ENCODE measurements at regions of chr6 and their contacts with region 1.

Region 1: GRCh38 chr6:109187399-109188114 is 92.2 kb downstream of the CEP57L1 start:
- DNase-seq: peak; percentile 15 to 70 (median 66)
- ATAC-seq: peak; percentile 47 to 67
- H3K4me3 ChIP-seq: no peak overlapping the region
- H3K27ac ChIP-seq: no peak overlapping the region
- H3K4me1 ChIP-seq: peaks cover 1% of the 10 kb centered on the region
- H3K27me3 ChIP-seq: no peaks in the 10 kb centered on the region

Region 2: DNA sequence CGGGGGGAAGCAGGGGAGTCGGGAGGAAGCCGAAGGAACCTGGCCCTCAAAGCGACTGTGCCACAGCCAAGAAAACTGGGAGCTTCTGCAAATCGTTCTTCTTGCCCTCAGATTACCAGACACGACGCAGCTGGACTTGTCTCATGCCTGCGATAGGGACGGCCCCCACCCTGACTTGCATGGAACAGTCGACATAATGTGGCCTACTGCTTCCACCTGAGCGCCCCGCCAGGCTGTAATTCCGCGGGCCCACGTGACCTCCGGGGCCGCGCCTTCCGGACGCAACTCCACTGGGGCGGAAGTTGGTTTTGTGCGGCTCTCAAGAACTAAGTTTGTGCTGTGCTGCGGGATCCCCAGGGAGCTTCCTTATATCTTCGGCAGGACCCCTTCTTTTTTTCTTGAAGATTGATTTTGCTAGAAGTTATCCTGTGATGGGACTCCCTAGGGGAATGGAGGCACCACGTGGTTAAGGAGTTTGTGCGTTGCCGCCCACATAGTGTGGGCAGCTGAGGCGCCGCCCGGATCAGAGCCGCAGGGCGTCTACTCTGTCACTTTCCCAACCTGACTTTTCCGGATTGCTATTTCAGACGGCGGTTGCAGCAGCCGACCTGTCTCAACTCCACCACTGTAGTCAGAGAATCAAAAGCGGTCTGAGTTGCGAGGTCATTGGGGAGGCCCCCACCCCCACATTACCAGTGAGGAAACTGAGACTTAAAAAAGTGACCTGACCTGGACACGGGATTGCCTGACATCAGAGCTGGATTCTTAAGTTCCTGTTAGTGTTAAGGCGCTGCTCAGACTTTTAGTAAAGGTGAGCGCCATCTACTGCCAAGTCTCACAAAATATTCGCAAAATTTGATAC is 195.2 kb after region 1 on chr6:
- intact Hi-C with region 1: loop called (anchors 5 kb)
- DNase-seq: peak; percentile 95 to 98 (median 97)
- ATAC-seq: peak; percentile 95
- H3K4me3 ChIP-seq: peak overlapping the region; percentile 81
- H3K27ac ChIP-seq: peak overlapping the region; percentile 80
- H3K4me1 ChIP-seq: no peaks in the 10 kb centered on the region
- H3K27me3 ChIP-seq: no peaks in the 10 kb centered on the region

Region 3: DNA sequence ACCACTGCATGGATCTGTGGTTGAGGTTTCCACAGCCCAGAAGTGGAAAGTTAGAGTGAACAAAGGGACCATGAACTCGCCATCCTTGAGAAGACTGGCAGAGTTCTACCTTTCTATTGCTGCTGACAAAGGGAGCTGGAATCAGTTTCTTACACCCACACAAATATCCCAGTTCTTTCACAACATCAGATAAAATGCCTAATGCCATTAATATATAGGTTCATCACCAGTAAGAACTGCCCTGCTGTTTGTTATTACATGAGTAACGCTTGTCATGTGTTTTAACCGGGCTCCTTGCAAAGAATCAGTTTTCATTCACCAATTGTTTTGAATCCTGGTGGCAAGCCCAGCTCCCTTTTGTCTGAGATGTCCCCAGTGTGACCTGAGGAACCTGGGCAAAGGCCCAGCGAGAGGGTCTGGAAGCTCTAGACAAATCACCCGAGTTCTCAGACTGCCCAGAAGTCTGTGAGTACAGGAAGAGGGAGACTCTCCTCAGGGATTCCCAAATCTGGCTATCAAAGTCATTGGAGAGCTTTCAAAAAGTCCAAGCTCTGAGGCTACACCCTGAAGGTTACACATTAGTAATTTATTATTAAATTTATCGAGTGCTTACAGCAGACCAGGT is 202.2 kb after region 1 on chr6:
- intact Hi-C with region 1: loop called (anchors 5 kb)
- DNase-seq: no peak
- ATAC-seq: peak in 1 of 2 donors; percentile 70
- H3K4me3 ChIP-seq: no peak overlapping the region
- H3K27ac ChIP-seq: peak overlapping the region; percentile 52
- H3K4me1 ChIP-seq: no peaks in the 10 kb centered on the region
- H3K27me3 ChIP-seq: no peaks in the 10 kb centered on the region

Region 4: DNA sequence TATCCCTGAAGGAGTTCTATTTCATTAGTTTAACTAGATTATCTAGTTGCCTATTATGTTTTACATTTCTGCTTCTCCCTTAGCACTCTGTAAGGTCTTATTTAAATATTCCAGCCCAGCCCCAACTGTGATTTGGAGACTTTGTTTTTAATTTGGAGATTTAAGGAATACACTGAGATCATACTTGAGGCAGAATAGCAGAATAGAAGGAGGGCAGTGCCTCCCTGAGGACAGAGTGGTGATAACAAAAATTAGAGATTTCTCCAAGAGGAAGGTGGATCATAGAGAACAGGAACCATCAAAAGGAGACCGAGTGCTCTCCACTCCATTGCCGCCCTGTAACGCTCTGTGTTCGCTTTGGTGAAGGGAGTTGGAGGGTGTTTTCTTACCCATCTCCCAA is 209.5 kb after region 1 on chr6:
- intact Hi-C with region 1: loop called in 1 of 4 experiments (anchors 5 kb)
- DNase-seq: no peak
- ATAC-seq: peak; percentile 50 to 75
- H3K4me3 ChIP-seq: no peak overlapping the region
- H3K27ac ChIP-seq: no peak overlapping the region
- H3K4me1 ChIP-seq: no peaks in the 10 kb centered on the region
- H3K27me3 ChIP-seq: no peaks in the 10 kb centered on the region

Measured in right cardiac atrium (tissue), 5 donors.